Activated CD8-positive, alpha-beta T cell treated with anti-CD3 and anti-CD28 coated beads for 36 hours (primary cell): ENCODE measurements at regions of chr5 and their contacts with region 1.

Region 1: DNA sequence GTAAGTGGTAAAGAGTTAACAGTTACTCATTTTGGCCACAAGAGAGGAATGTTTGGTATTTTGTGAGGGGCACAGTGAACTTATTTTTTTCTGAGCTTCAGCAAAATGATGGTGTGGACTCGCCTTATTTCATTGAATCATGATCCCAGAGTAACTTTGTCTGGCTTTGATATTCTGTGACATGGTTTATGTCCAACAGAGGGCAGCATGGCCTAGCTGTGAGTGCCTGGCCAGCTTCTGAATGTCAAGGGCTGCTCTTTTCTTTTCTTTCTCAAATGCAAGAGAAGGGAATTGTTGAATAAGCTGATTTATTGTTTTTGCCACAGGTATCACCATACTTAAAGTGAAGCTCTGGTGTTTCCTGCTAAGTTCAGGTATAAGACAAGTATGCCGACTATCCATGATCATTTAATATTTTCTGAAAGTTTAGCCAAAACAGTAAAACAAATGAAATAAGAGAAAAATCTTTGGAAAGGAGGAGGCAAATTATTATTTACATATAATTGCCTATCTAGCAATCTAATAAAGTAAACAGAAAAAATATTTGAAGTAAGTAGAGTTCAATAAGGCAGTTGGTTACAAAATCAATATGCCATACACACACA is 31.7 kb downstream of the MRPL22 start:
- DNase-seq: peak; percentile 22
- ATAC-seq: no peak
- H3K4me3 Mint-ChIP-seq: no peak overlapping the region
- H3K27ac Mint-ChIP-seq: no peak overlapping the region
- H3K4me1 Mint-ChIP-seq: peaks cover 2% of the 10 kb centered on the region
- H3K27me3 Mint-ChIP-seq: no peaks in the 10 kb centered on the region
- CTCF ChIP-seq: peak; percentile 30

Region 2: DNA sequence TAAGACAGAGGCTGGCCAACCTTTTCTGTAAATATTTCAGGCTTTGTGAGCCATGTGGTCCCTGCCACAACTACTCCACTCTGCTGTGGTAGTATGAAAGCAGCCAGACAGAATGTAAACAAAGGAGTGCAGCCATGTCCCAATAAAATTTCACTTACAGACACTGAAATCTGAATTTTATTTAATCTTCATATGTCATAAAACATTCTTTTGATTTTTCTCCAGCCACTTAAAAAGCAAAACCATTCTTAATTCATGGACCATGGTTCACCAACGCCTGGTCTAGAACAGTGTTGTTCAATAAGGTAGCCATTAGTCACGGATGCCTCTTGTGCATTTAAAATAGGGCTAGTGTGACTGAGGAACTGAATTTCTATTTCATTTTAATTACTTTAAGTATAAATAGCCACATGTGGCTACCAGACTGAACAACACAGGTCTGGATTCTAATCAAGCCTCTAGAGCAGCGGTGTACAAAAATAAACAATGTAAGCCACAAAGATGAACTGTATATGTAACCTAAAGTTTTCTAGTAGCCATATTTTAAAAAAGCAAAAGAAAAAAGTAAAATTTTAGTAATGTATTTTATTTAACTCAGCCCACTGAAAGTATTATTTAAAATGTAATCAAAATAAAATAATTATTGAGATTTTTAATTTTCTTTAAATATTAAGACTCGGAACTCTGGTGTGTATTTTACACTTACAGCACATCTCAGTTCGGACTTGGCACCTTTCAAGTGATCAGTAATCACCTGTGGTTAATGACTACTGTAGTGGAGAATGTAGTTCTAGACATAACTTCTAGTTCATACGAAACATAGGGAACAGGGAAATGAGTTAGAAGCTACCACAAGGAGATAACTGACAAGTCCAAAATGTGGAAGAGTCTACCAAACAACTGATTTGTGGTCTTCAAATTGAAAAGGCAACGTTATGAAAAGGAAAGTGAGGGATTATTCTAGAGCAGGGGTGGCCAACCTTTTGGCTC is 48.8 kb before region 1 on chr5:
- CTCF ChIA-PET with region 1: no interaction called
- POLR2A ChIA-PET with region 1: no interaction called
- intact Hi-C with region 1: no loop called
- DNase-seq: no peak
- ATAC-seq: no peak
- H3K4me3 Mint-ChIP-seq: no peak overlapping the region
- H3K27ac Mint-ChIP-seq: no peak overlapping the region
- H3K4me1 Mint-ChIP-seq: no peaks in the 10 kb centered on the region
- H3K27me3 Mint-ChIP-seq: no peaks in the 10 kb centered on the region
- CTCF ChIP-seq: no peak

Region 3: DNA sequence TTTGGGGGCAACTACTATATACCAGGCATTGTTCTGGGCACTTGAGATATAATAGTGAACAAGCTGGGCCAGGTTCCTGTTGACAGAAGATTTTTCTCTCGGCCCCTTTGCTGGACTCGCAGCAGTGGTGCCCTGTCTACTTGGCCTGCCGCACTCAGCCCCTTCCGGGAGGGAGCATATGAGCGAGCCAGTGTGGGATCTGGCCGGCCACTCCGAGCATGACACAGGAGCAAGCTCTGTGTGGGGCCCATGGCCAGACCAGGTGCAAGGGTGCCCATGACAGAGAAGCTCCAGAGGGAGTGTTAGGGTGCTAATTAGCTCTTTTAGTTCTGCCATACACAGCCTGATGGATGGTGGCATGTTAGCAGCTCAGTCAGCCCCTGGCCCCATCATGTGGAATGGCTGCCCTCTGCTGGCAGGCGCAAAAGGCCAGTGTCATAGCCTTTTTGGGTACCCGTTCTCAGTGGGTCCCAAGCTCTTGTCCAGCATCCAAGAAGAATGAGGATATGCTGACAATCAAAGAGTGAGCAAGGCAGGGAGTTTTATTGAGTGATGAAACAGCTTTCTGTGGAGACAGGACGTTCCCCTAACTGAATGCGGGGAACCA is 31.7 kb after region 1 on chr5:
- CTCF ChIA-PET with region 1: interaction called, 16 read pairs
- POLR2A ChIA-PET with region 1: no interaction called
- intact Hi-C with region 1: no loop called
- DNase-seq: peak; percentile 49
- ATAC-seq: no peak
- H3K4me3 Mint-ChIP-seq: no peak overlapping the region
- H3K27ac Mint-ChIP-seq: no peak overlapping the region
- H3K4me1 Mint-ChIP-seq: no peaks in the 10 kb centered on the region
- H3K27me3 Mint-ChIP-seq: peaks cover 12% of the 10 kb centered on the region
- CTCF ChIP-seq: peak; percentile 29